ENCODE measurements at regions of chr2 and their contacts with region 1.

Region 1: DNA sequence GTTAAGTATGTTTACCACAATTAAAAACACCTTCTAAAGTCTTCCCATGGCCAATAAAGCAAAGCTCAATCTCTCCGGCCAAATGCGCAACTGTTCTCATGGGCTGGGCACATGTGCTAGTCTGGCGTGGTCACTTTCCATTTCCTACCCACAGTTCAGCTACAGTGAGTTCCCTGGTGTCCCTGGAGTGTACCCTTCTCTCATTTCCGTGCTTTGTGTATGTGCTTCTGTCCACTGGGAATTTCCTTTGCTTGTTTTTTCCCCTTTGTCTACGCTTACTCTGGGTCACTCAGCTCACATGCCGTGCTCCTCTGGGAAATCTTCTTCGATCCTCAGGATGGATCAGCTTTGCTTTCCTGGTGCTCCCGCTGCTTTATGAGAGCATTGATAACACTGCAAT is 69.6 kb upstream of the GYPC start:
- DNase-seq: no peak
- ATAC-seq: no peak

Region 2: GRCh38 chr2:126634273-126634861 is 48.0 kb after region 1 on chr2:
- intact Hi-C with region 1: loop called (anchors 1 kb)
- DNase-seq: no peak
- ATAC-seq: no peak

Region 3: DNA sequence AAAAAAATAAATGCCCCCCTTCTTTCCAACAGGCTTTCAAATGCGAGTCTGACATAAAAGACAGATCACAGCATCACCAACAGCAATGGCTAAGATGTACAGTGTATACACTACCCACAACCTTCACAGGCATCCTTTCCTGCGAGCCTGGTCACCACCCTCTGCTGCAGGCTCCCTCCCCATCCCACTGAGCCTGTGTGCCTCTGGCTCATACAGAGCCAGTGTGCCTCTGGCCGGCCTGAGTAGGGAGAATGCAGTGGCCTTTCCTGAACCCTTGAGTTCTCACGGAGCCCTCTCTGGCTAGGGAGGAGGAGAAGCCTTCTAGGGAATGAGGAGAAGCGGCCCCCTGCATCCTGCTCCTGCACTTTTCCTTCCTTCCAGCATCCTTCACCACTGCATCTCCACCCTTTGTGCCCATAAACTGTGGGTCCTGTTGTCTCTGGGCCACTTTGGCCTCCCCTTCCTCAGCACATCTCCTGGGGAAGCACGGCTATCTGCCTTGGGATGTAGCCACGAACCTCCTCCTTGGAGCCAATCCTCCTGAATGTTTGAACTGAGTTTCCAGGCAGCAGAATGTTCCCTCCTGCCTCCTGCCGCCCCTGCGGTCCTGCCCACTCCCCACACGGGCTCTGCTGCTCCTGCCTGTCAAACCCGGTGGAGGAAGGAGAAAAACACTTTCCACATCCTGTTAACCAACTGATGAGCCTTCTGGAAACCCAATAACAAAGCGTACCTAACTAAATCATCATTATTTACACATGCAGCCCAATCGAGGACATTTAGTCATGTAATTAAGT is 92.2 kb after region 1 on chr2:
- intact Hi-C with region 1: no loop called
- DNase-seq: no peak
- ATAC-seq: peak; percentile 79